Motor neuron (in vitro differentiated cells): ENCODE measurements at regions of chr9 and their contacts with region 1.

Region 1: DNA sequence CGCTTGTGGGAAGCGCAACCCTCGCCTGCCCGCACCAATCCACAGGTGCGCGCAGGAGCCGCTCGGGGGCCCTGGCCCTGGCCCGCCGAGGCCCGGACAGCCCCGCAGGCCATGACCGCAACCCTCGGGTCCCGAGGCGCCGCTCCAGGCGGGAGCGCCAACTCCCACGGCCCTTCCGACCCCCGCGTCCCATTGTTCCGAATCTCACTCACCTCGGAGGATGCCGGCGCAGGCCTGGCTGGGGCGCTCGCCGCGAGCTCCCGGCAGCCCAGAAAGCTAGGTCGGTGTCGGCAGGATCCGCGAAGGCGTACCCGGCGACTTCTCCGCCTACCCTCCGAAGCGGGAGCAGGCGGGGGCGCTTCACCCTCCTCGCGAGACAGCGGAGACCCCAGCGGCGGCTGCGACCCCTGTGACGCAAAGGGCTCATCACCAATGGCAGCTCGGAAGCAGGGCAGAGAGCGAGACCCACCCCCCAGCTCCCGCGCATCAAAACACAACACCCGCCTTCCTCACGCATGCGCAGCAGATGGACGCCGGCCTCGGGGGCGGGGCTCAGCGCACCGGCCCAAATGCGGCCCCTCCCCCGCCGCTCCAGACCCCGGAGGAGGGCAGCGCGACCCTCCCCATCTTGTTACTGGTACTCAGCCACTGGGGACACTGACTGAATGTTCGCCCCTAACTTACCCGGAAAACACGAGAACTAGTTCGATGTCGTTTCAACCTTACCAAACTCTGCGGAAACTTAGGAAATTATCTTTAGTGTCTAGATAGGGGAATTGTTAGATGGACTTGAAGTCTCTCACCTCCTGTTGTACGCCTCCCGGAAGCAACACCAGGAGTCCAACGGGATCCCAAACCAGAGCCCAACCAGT is 1.3 kb upstream of the SMIM27 start:
- ATAC-seq: peak; percentile 54 to 91 (median 87)
- H3K4me3 ChIP-seq: peak overlapping the region; percentile 75 to 100 (median 96)
- H3K27ac ChIP-seq: peak overlapping the region; percentile 67 to 96
- H3K4me1 ChIP-seq: peaks cover 4 to 6% of the 10 kb centered on the region in 2 donors

Region 2: DNA sequence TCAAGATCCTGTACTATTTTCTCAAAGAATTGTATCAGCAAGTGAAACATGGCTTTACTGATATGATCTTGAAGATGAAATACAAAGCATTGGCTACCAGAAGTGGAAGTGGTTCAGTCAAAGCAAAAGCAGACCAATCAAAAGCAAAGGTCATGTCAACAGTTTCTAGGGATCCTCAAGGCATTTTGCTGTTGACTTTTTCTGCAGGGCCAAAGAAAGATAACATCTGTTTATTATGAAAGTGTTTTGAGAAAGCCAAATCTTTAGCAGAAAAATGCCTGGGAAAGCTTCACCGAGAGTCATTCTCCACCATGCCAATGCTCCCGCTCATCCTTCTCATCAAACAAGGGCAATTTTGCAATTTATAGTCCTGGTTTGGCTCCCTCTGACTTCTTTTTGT is 256.7 kb before region 1 on chr9:
- in situ Hi-C with region 1: no loop called
- ATAC-seq: no peak
- H3K4me3 ChIP-seq: no peak overlapping the region
- H3K27ac ChIP-seq: no peak overlapping the region
- H3K4me1 ChIP-seq: peaks cover 0 to 2% of the 10 kb centered on the region in 2 donors

Region 3: DNA sequence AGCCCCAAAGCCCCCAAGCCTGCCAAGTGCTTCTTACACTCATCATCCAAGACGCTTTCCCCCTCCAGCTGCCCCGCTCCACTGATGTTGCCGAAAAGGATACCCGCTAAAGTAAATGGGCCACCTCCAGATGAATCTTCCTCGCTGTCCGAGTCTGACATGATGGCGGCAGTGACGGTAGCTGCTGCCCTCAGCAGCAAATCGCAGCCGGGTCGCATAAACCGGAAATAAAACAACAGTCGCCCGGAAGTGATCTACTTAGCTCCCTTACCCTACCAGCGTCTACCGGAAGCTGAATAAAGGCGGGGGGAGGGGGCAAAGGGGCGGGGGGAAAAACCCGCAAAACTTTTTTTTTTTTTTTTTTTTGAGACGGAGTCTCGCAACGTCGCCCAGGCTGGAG is 84.6 kb after region 1 on chr9 and contains the start of gene TAF1L:
- in situ Hi-C with region 1: no loop called
- ATAC-seq: no peak
- H3K4me3 ChIP-seq: no peak within 1 kb of the TSS
- H3K27ac ChIP-seq: no peak within 1 kb of the TSS
- H3K4me1 ChIP-seq: no peaks in the 10 kb centered on the region
- total RNA-seq, gene TAF1L: 0.09 to 0.43 (median 0.19) TPM in 6 of 8 experiments, not detected in the others

Region 4: DNA sequence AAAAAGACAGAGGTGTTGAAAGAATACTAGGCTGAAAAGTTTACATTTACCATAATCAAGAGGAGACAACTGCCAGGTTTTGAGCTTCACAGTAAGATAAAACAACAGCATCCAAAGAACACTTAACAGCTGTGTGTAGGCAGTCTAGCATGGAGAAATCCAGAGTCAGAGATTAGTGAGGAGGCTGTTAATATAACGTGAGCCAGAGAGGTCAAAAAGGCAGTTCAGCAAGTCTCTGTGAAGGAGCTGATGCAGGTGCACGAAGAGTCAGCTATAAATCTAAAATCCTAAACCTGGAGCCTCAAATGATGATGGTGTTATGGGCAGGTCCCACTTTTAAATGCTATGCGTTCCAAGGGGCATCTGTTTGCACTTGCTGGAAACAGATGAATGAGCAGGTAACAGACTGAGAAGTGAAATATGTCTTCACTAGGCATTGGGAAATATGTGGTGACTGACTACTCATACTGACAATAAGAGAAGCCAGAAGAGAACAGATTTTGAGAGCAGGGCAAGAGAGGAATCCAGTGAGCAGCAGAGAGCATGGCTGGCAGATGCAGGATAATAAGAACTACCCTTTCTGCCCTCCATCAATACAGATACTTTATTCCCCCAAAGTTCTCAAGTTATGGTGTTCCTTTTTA is 441.9 kb after region 1 on chr9:
- in situ Hi-C with region 1: loop called in 1 of 9 experiments (anchors 25 kb)
- ATAC-seq: no peak
- H3K4me3 ChIP-seq: no peak overlapping the region
- H3K27ac ChIP-seq: no peak overlapping the region
- H3K4me1 ChIP-seq: peaks cover 0 to 2% of the 10 kb centered on the region in 2 donors